Activated B cell treated with CpG ODN at 0.5 μM for 24 hours (primary cell): ENCODE measurements at regions of chr5 and their contacts with region 1.

Region 1: DNA sequence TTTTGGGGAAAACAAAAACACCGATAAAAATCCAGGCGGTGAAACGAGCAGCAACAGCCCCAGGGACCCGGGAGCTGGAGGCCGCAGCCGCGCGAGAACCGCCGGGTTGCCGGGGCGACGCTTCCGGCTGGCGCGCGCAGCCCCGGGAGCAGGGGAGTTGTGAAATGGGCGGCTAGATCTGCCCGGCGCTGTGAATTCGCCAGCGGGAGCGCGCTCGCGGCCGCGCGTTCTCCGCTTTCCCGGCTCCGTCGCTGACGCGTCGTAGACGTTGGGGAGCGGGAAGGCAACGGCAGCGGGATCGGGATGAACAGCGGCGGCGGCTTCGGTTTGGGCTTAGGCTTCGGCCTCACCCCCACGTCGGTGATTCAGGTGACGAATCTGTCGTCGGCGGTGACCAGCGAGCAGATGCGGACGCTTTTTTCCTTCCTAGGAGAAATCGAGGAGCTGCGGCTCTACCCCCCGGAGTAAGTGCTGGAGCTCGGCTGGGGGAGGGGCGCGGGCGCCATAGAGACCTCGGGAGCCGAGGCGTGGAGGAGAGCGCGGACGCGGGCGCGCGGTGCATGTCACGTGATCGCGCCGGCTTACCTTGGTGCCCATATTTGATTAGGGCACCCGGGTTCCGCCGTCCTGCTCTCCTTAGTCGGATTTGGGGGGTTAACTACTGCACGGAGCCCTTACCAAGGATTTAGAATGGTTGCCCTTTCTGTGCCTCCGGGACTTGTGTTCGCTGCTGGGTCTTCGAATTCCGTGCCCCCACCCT is at the start of gene SREK1:
- DNase-seq: peak; percentile 84
- ATAC-seq: peak; percentile 86
- H3K4me3 Mint-ChIP-seq: peak within 1 kb of the TSS; percentile 99
- H3K27ac Mint-ChIP-seq: peak within 1 kb of the TSS; percentile 100
- H3K4me1 Mint-ChIP-seq: peaks cover 33% of the 10 kb centered on the region
- H3K27me3 Mint-ChIP-seq: no peaks in the 10 kb centered on the region
- CTCF ChIP-seq: no peak
- total RNA-seq, gene SREK1: 78.2 and 104 TPM in 2 replicates

Region 2: DNA sequence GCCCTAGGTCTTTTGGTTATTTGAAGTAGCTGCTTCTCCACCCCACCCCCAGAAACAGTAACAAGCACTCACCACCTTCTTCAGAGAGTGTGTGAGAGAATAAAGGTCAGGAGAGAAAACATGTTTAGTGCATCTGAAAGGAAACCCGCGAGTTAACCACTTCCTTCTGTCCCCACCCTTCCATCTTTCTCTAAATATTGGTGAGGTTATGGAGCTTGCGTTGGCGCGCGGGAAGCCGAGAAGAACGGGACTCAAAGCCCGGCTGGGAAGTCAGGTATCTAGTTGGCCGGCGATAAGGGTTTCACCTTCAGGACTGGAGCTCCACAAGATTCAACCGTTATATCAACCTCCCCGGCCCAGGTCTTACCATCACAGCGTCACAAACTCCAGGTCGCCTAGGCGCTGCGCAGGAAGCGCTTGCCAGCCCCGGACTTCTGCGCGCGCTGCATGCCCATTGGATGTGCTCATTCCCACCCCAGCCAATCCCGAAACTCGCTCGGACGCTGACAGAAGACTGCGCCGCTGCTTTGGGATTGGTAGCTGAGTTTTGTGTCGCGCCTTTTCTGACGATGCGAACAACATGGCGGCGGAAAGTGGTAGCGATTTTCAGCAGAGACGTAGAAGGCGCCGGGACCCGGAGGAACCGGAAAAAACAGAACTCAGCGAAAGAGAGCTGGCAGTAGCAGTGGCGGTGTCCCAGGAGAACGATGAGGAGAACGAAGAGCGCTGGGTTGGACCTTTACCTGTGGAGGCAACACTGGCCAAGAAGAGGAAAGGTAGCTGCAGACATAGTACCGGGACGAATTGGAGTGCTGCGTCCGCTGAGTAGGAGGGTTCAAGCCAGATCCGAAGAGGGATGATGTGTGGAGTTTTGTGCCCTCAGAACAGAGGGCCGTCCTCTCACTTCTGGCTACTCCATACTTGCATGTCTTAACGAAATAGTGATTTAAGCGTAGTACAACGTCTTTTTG is 581.2 kb before region 1 on chr5 and contains the starts of genes CENPK and PPWD1:
- CTCF ChIA-PET with region 1: no interaction called
- POLR2A ChIA-PET with region 1: interaction called, 6 read pairs
- intact Hi-C with region 1: loop called (anchors 1 kb)
- DNase-seq: peak; percentile 81
- ATAC-seq: peak; percentile 99
- H3K4me3 Mint-ChIP-seq: peak within 1 kb of the TSS; percentile 96
- H3K27ac Mint-ChIP-seq: peak within 1 kb of the TSS; percentile 97
- H3K4me1 Mint-ChIP-seq: peaks cover 41% of the 10 kb centered on the region
- H3K27me3 Mint-ChIP-seq: no peaks in the 10 kb centered on the region
- CTCF ChIP-seq: no peak
- total RNA-seq, gene CENPK: 10.7 and 15.1 TPM in 2 replicates
- total RNA-seq, gene PPWD1: 57.8 and 69.7 TPM in 2 replicates

Region 3: DNA sequence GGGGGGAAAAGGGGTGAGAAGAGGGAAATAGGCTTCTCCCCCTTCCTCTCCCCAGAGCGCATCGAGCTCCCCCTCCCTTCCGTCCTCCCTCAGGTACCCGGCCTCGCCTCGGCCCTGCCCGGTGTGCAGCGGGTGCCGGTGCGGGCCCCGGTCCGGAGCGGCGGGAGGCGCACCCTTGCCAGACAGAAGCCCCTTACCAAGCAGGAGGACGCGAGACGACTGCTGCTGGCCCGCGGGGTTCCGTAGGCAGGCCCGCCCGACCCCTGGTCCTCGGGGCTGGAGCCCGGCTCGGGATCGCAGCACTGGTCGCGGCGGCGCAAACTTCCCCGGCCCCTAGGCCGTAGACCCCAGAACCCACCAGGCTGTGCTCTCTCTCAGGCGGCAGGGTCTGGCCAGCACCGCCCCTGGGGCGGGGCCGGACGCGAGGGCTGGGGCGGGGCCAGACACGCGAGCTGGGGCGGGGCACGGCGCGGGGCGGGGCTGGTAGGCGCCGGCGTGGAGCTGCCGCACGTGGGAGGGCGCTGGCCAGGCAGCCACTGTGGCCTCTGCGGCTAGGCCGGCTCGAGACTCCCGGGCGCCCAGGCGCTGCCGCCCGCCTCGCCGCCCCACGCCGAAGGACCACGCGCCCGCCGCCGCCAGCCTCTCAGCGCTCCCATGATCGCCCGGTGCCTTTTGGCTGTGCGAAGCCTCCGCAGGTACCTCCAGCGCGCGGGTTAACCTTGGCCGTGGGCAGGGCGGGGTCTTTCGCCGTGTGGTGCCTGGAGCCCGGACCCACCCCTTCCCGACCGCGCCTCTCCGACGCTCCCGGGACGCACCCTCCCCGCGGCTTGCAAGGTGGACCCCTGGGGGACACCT is 422.3 kb before region 1 on chr5 and contains the starts of genes NLN and SGTB:
- CTCF ChIA-PET with region 1: no interaction called
- POLR2A ChIA-PET with region 1: interaction called, 12 read pairs
- intact Hi-C with region 1: loop called (anchors 1 kb)
- DNase-seq: peak; percentile 92
- ATAC-seq: peak; percentile 97
- H3K4me3 Mint-ChIP-seq: peak within 1 kb of the TSS; percentile 89
- H3K27ac Mint-ChIP-seq: peak within 1 kb of the TSS; percentile 88
- H3K4me1 Mint-ChIP-seq: peaks cover 24% of the 10 kb centered on the region
- H3K27me3 Mint-ChIP-seq: no peaks in the 10 kb centered on the region
- CTCF ChIP-seq: no peak
- total RNA-seq, gene NLN: 14.2 and 16.5 TPM in 2 replicates
- total RNA-seq, gene SGTB: 7.1 and 9.5 TPM in 2 replicates

Region 4: GRCh38 chr5:65903581-65903980 is 240.7 kb before region 1 on chr5:
- CTCF ChIA-PET with region 1: no interaction called
- POLR2A ChIA-PET with region 1: no interaction called
- intact Hi-C with region 1: no loop called
- DNase-seq: no peak
- ATAC-seq: no peak
- H3K4me3 Mint-ChIP-seq: no peak overlapping the region
- H3K27ac Mint-ChIP-seq: no peak overlapping the region
- H3K4me1 Mint-ChIP-seq: no peaks in the 10 kb centered on the region
- H3K27me3 Mint-ChIP-seq: no peaks in the 10 kb centered on the region
- CTCF ChIP-seq: no peak

Region 5: GRCh38 chr5:66171349-66172344 is 27.4 kb after region 1 on chr5:
- CTCF ChIA-PET with region 1: no interaction called
- POLR2A ChIA-PET with region 1: interaction called, 3 read pairs
- intact Hi-C with region 1: loop called (anchors 2 kb)
- DNase-seq: no peak
- ATAC-seq: peak; percentile 65
- H3K4me3 Mint-ChIP-seq: no peak overlapping the region
- H3K27ac Mint-ChIP-seq: no peak overlapping the region
- H3K4me1 Mint-ChIP-seq: peaks cover 14% of the 10 kb centered on the region
- H3K27me3 Mint-ChIP-seq: no peaks in the 10 kb centered on the region
- CTCF ChIP-seq: no peak